MCF 10A (cell line): ENCODE measurements at regions of chr7 and their contacts with region 1.

Region 1: GRCh38 chr7:100132697-100133151 is 6.0 kb downstream of the MBLAC1 start:
- DNase-seq: peak; percentile 71
- H3K4me3 Mint-ChIP-seq: no peak overlapping the region
- H3K27ac Mint-ChIP-seq: no peak overlapping the region
- H3K4me1 Mint-ChIP-seq: peaks cover 11% of the 10 kb centered on the region
- H3K27me3 Mint-ChIP-seq: peaks cover 10% of the 10 kb centered on the region
- CTCF ChIP-seq: peak; percentile 93

Region 2: DNA sequence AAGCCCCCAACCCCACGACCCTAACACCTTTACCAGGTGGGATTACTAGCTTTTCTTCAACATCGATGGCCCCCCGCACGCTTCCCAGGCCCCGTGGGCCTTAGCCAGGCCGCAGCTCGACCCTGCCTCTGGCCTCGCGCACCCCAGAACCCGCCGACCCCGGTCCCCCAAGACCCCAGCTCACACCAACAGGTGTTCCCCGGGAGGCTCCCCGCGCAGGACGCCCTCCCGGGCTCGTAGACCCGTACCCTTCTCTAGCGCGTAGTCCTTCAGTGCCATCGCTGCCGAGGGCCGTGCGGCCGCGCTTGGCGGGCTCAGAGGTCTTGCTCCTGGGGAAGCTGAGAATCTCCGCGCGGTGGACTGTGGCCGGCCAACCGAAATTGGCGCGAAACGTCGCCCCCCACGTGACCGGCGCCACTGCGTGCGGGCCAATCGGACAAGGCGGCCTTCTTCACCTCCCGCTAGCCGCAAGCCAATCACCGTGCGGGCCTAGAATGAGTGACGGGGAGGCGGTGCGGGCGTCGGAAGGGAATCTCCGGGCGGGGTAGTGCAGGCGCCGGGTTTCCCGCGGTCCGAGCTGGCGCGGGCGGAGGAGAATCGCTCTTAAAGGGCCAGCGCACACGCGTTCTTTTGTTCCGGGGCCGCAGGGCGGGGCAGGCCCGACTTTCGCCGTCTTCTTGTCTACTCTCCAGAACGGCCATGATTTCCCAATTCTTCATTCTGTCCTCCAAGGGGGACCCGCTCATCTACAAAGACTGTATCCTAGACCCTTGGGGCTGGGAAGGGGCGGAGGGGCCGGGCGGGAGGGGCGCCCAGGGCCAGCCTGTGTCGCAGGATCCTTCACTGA is 31.5 kb before region 1 on chr7 and contains the starts of genes AP4M1 and MCM7:
- CTCF ChIA-PET with region 1: interaction called, 16 read pairs
- POLR2A ChIA-PET with region 1: no interaction called
- intact Hi-C with region 1: no loop called
- DNase-seq: peak; percentile 99
- H3K4me3 Mint-ChIP-seq: peak within 1 kb of the TSS; percentile 98
- H3K27ac Mint-ChIP-seq: peak within 1 kb of the TSS; percentile 99
- H3K4me1 Mint-ChIP-seq: peaks cover 32% of the 10 kb centered on the region
- H3K27me3 Mint-ChIP-seq: no peaks in the 10 kb centered on the region
- CTCF ChIP-seq: no peak
- total RNA-seq, gene AP4M1: 13.5 and 13.6 TPM in 2 replicates
- total RNA-seq, gene MCM7: 38.5 and 67.8 TPM in 2 replicates

Region 3: DNA sequence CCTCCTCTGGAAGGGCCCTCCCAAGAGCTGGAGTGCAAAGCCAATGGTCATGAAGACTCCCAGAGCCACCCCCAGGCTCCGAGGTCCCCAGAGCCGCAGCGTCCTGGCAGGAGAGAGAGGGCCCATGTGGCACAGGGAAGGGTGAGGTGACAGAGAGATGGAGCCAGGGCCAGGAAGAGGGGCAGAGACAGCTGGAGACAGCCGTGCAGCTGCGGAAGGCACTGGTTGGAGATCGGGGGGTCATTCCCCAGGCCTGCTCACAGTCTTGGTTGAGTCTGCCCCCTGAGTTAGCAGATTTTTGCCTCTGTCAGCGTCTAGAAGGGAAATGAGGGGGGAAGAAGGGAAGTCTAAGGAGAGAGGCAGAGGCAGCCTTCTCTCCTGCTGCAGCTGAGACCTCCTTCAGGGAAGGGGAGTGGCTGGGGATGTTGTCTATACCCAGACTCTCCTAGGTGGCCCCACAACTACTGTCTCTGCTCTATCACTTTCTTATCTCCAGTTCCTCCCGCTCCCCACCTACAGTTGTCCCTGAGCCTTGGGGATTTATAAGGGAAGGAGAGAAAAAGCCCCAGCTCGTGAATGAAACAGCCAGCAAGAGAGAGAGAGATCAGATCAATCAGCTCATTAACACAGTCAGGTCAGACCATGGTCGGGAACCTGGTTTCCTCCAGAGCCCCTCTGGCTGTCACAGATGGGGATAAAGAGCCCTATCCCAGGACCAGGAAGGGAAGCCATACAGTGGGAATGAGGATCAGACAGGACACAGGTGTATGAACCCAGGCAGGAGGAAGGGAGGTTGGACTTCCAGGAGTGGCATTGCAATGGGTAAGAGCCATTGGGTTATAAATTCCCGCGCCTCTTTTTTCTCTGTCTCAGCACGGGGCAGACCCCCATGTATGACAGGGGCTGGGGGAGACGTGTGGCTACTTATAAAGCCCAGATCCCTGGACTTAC is 34.5 kb after region 1 on chr7:
- CTCF ChIA-PET with region 1: interaction called, 10 read pairs
- POLR2A ChIA-PET with region 1: no interaction called
- intact Hi-C with region 1: no loop called
- DNase-seq: no peak
- H3K4me3 Mint-ChIP-seq: no peak overlapping the region
- H3K27ac Mint-ChIP-seq: peak overlapping the region; percentile 54
- H3K4me1 Mint-ChIP-seq: peaks cover 28% of the 10 kb centered on the region
- H3K27me3 Mint-ChIP-seq: peaks cover 42% of the 10 kb centered on the region
- CTCF ChIP-seq: no peak

Region 4: DNA sequence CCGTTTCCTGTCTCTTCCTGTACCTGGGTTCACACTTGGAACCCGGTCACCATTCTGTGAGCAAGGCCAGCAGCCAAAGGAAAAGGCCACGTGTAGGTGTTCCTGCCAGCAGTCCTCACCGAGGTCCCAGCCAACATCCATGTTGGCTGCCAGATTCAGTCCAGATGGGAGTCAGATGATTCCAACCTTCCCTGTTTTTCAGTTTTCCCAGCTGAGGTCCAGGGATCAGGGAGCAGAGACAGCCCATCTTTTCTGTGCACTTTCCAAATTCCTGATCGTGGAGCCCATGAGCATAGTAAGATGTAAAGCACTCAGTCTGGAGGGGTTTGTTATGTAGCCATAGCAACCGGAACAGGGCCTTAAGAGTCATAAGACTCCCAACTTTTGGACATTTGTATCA is 83.2 kb after region 1 on chr7:
- CTCF ChIA-PET with region 1: interaction called, 93 read pairs
- POLR2A ChIA-PET with region 1: no interaction called
- intact Hi-C with region 1: loop called (anchors 2 kb)
- DNase-seq: no peak
- H3K4me3 Mint-ChIP-seq: no peak overlapping the region
- H3K27ac Mint-ChIP-seq: no peak overlapping the region
- H3K4me1 Mint-ChIP-seq: peaks cover 6% of the 10 kb centered on the region
- H3K27me3 Mint-ChIP-seq: peaks cover 12% of the 10 kb centered on the region
- CTCF ChIP-seq: no peak

Region 5: GRCh38 chr7:100407285-100408180 is 274.8 kb after region 1 on chr7:
- CTCF ChIA-PET with region 1: no interaction called
- POLR2A ChIA-PET with region 1: no interaction called
- intact Hi-C with region 1: loop called (anchors 1 kb)
- DNase-seq: peak; percentile 82
- H3K4me3 Mint-ChIP-seq: no peak overlapping the region
- H3K27ac Mint-ChIP-seq: no peak overlapping the region
- H3K4me1 Mint-ChIP-seq: no peaks in the 10 kb centered on the region
- H3K27me3 Mint-ChIP-seq: peaks cover 9% of the 10 kb centered on the region
- CTCF ChIP-seq: peak; percentile 62